ENCODE measurements at regions of chr22 and their contacts with region 1.

Region 1: DNA sequence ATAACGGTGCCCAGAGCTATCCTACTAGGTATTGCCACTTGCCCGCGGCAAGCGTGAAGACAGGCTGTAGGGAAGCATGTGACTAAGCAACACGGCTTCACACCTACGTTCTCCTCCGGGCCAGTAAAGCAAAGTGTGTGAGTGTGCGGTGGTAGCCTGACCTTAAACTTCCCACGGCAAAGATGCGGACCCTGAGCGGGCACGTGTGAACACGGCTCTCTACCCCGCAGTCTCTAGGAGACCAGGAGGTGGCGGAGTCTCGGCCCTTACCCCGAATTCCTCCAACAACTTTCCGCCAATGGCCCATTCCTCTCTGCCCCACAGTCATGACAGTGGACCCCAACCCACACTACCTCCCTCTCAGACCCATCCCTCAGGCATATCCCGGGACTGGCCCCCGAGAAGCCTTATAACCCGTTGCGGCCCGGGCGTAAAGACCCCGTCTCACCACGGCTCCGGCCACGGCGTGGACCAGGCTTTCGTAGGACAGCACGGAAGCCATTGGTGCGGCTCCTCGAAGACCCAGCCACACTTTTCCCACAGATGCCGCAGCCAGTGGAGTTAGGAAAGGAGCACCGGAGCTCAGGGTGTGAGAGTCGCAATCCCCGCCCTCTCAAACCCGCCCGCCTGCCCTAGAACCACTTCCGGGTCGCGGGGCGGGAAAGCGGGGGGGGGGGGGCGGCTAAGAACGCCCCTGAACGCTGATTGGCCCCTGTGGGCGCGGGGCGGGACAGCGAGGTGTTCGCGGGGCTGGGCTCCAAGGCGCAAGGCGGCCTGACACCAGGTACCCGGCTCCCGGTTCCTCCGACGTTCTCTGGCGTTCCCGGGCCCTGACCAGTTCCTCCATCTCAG is at the start of gene SLC25A17:
- DNase-seq: peak; percentile 94
- total RNA-seq, gene SLC25A17: 4.5 TPM

Region 2: DNA sequence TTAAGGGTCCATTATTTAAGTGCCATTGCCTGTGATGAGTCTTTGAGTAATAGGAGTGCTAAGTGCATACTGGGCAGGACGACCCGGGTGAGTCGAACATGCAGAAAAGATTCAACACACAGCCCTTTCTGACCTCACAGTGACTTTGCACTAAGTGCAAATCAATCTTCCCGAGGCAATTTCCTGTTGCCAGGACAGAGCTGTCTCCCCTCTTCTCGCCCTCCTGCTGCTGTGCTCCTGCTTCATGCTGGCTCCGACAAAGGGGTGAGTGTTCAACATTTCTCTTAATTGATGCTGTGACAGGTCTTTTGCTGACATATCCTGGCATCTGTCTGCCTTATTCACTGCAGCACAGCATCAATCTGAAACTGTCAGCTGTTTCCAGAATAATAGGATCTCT is 97.7 kb before region 1 on chr22:
- intact Hi-C with region 1: no loop called
- DNase-seq: no peak

Region 3: DNA sequence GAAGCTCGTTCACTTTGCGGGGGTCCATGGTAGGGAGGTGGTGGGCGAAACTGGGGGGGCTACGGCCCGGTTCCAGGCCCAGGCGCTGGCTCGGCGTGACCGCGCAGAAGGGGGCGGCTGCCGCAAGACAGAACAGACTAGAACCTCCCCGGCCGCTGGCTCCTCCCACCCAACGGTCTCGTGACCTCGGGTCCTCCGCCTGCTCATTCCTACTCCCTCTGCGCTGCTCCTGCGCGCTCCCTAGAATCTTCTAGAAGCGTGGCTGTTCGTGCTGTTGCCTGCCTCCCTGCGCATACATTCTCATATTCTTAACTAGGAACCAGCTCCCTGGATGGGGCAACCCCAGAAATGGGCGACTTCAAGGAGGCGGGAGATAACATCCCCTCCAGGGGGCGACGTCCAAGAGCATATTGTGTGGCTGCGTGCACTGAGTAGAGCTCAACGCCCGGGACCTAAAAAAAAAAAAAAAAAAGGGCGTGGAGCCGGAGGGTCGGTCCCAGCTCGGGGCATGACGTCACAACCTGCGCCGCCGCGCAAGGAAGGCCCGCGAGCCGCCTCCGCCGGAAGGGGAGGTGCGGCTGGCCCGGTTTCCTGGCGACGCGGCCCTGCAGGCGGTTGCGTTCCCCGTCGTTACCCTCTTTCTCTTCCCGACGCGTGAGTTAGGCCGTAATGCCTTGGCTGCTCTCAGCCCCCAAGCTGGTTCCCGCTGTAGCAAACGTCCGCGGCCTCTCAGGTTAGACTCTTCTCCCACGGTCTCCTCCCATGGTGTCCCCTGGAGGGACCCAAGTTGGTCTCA is 37.7 kb after region 1 on chr22 and contains the starts of genes ST13 and XPNPEP3:
- intact Hi-C with region 1: loop called (anchors 5 kb)
- DNase-seq: peak; percentile 98
- total RNA-seq, gene ST13: 187 TPM
- total RNA-seq, gene XPNPEP3: 22.0 TPM